HCT116 (cell line): ENCODE measurements at regions of chr19 and their contacts with region 1.

Region 1: GRCh38 chr19:18152444-18152816 is 533 bp upstream of the PIK3R2 start:
- DNase-seq: peak; percentile 96
- ATAC-seq: peak; percentile 65
- H3K4me3 ChIP-seq: peak overlapping the region; percentile 49 to 83
- H3K27ac ChIP-seq: peak overlapping the region; percentile 85
- H3K4me1 ChIP-seq: peaks cover 32 to 44% of the 10 kb centered on the region in 2 experiments
- H3K27me3 ChIP-seq: no peaks in the 10 kb centered on the region
- CTCF ChIP-seq: peak in 2 of 3 experiments; percentile 57 to 61; a peak in 5 of 6 replicates
- POLR2A ChIP-seq: no peak
- RAD21 ChIP-seq: no peak

Region 2: DNA sequence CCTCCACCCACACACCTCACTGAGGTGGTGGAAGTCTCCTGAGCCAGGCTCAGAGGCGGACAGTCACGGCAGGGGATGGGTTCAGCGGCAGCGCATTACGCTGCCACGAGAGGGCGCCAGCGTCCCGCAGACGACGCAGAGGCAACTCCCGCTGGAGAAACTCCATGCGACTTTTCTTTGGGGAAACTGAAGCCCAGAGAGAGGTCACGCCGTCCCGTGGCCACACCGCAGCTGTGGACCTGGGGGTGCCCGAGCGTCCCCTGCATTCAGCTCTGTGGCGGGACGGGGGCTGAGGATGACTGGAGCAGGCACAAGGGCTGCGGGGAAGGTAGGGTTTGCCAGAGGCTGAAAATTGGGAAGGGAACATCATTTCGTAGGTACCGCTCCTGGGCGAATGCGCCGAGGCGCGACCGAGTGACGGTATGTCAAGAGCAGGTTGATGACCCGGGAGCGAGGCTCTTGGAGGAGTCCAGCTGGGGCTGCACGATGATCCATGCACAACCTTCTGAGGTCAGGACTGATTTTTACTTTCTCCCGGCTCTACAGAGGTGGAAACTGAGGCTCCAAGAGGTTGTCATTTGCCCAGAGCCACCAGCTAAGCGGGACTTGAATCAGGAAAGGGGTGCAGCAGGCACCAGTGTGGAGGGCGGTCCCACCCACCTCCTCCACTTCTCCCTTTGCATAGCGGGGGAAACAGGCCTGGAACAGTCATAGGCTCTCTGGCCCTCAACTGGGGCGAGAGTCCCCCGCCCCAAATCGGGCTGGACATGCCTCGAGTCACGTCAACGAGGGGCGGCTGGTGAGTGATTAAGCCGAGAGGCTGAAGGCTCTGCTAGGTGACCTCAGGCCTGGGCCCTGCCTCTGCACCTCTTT is 145.2 kb before region 1 on chr19:
- CTCF ChIA-PET with region 1: no interaction called
- POLR2A ChIA-PET with region 1: no interaction called
- RAD21 ChIA-PET with region 1: no interaction called
- intact Hi-C with region 1: loop called (anchors 10 kb)
- DNase-seq: no peak
- ATAC-seq: peak; percentile 95
- H3K4me3 ChIP-seq: no peak overlapping the region
- H3K27ac ChIP-seq: peak overlapping the region; percentile 53; the same call in 1 of the 2 replicates
- H3K4me1 ChIP-seq: peaks cover 2 to 17% of the 10 kb centered on the region in 2 experiments; a peak in 3 of 4 replicates
- H3K27me3 ChIP-seq: no peaks in the 10 kb centered on the region
- CTCF ChIP-seq: peak; percentile 86 to 97 (median 95)
- POLR2A ChIP-seq: no peak
- RAD21 ChIP-seq: peak; percentile 97

Region 3: GRCh38 chr19:18117692-18118378 is 34.6 kb before region 1 on chr19:
- CTCF ChIA-PET with region 1: interaction called, 11 read pairs
- POLR2A ChIA-PET with region 1: interaction called, 3 read pairs
- RAD21 ChIA-PET with region 1: no interaction called
- intact Hi-C with region 1: loop called (anchors 1 kb)
- DNase-seq: peak; percentile 39
- ATAC-seq: peak; percentile 87
- H3K4me3 ChIP-seq: peak overlapping the region; percentile 65 to 84
- H3K27ac ChIP-seq: peak overlapping the region; percentile 57
- H3K4me1 ChIP-seq: peaks cover 8 to 21% of the 10 kb centered on the region in 2 experiments
- H3K27me3 ChIP-seq: no peaks in the 10 kb centered on the region
- CTCF ChIP-seq: no peak
- POLR2A ChIP-seq: no peak
- RAD21 ChIP-seq: no peak